HCT116 (cell line): ENCODE measurements at regions of chr18 and their contacts with region 1.

Region 1: GRCh38 chr18:8084160-8084559 is 517.0 kb downstream of the PTPRM start:
- DNase-seq: peak; percentile 21
- ATAC-seq: peak; percentile 89
- H3K4me3 ChIP-seq: no peak overlapping the region
- H3K27ac ChIP-seq: no peak overlapping the region
- H3K4me1 ChIP-seq: no peaks in the 10 kb centered on the region
- H3K27me3 ChIP-seq: no peaks in the 10 kb centered on the region
- CTCF ChIP-seq: peak; percentile 34 to 77 (median 69); a peak in 5 of 6 replicates
- POLR2A ChIP-seq: no peak
- RAD21 ChIP-seq: peak; percentile 59

Region 2: DNA sequence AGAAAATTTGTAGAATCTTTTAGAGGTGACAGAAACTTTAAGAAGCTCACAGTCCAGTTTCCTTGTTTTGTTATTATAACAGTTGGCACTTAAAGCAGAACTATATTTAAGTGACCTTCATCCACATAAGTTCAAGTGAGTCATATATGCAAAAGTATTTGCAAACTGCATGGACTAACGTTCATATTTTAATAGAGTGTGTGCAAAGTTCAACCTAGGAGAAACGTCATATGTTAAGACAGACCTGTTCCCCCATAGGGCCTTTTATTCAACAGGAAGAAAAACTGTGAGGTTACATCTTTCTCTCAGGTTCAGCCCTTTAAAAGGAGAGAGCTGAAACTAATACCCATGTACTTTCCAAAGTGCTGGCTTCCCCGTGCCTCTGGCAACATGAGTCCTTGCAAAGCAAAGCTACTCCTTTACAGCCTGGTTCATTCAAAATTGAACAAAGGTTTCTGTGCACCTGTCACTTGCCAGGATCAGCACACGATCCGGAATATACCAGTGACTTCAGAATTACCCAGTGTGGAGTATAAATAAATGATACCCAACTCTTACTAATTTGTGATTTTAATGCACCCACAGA is 245.1 kb after region 1 on chr18:
- CTCF ChIA-PET with region 1: no interaction called
- POLR2A ChIA-PET with region 1: no interaction called
- RAD21 ChIA-PET with region 1: no interaction called
- intact Hi-C with region 1: loop called (anchors 10 kb)
- DNase-seq: no peak
- ATAC-seq: no peak
- H3K4me3 ChIP-seq: no peak overlapping the region
- H3K27ac ChIP-seq: no peak overlapping the region
- H3K4me1 ChIP-seq: no peaks in the 10 kb centered on the region; a peak in 1 of 4 replicates
- H3K27me3 ChIP-seq: no peaks in the 10 kb centered on the region; the same call in 1 of the 2 replicates
- CTCF ChIP-seq: no peak
- POLR2A ChIP-seq: no peak
- RAD21 ChIP-seq: no peak